Activated CD4-positive, alpha-beta T cell treated with anti-CD3 and anti-CD28 coated beads, Interleukin-2, amount 10 ng/mL, durations not matched to agents 24 days and 14 days (primary cell): ENCODE measurements at regions of chr14 and their contacts with region 1.

Region 1: DNA sequence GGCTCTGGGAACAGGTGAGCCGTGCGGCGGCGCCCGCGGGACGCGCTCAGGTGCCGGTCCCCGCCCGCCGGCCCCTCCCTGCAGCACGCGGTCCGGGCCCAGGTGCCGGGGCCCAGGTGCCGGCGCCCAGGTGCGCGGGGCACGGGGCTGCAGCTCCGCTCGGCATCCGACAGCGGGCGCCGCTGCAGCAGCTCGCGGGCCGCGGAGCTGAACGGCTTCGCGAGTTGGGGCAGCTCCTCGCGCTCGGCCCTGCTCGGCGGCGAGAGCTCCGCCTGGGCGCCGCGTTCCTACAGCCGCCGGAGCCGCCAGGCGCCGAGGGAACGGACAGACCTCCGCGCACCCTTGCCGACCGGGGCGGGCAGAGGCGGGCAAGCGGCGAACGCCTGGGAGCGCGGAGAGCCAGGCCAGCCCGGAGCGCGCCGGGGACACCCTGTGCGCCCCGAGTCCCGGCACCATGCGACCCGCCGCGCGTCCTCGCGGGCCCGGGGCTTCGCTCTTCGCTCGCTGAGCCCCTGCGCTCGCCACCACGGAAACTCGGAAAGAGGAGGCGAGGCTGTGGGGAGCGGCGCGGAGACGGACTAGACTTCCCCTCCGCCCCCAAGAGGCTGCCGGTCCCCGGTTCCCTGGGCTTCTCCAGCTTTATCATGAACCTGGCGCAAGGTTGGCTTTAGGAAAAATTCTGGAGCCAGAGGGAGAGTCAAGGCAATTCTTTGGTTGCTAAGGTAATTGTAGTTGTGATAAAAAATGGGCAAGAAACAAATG is at the start of gene RGS6:
- DNase-seq: peak; percentile 76
- H3K4me3 Mint-ChIP-seq: peak within 1 kb of the TSS; percentile 75
- H3K27ac Mint-ChIP-seq: peak within 1 kb of the TSS; percentile 82
- H3K4me1 Mint-ChIP-seq: peaks cover 13% of the 10 kb centered on the region
- H3K27me3 Mint-ChIP-seq: peaks cover 61% of the 10 kb centered on the region
- total RNA-seq, gene RGS6: 2.5 TPM in 2 replicates

Region 2: DNA sequence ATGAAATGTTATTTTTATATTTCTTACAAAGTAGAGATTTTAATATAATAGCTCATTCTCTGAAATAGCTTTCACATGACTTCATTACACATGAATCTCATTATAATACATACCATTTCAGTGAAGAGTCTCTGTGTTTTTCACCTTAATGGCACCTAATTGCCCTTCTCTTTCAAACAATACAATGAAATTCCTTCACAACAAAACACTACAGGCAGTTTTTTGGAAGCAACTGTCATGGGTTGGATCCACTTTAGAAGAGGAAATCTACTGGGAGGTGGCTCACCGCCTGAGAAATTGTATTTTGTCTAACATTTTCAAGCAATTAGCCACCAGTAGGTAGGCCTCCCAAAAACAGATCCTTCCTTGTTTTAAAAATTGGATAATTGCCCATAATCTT is 40.4 kb before region 1 on chr14:
- intact Hi-C with region 1: no loop called
- DNase-seq: no peak
- H3K4me3 Mint-ChIP-seq: no peak overlapping the region
- H3K27ac Mint-ChIP-seq: no peak overlapping the region
- H3K4me1 Mint-ChIP-seq: no peaks in the 10 kb centered on the region
- H3K27me3 Mint-ChIP-seq: no peaks in the 10 kb centered on the region

Region 3: GRCh38 chr14:71967704-71968103 is 35.3 kb after region 1 on chr14:
- intact Hi-C with region 1: loop called (anchors 1 kb)
- DNase-seq: no peak
- H3K4me3 Mint-ChIP-seq: peak overlapping the region; percentile 63
- H3K27ac Mint-ChIP-seq: peak overlapping the region; percentile 90
- H3K4me1 Mint-ChIP-seq: peaks cover 11% of the 10 kb centered on the region
- H3K27me3 Mint-ChIP-seq: peaks cover 8% of the 10 kb centered on the region

Region 4: DNA sequence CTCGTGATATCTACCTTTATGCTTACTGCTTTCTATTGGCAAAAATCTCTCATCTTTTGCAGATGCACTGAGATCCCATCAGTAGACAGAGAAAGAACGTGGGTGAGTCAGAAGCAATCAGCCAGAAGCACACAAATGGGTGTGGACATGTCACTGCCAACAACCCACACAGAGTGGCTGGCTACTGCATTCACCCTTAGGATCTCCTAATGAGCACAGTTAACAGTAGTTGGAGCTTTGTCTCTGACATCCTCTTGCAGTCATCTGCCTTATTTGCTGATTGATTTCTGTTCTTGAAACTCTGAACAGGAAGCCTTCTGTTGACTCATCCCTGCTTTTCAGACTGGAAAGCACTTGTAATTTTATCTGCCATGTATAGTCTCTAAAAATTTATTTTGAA is 117.1 kb after region 1 on chr14:
- intact Hi-C with region 1: loop called (anchors 2 kb)
- DNase-seq: peak; percentile 75
- H3K4me3 Mint-ChIP-seq: peak overlapping the region; percentile 40
- H3K27ac Mint-ChIP-seq: peak overlapping the region; percentile 79
- H3K4me1 Mint-ChIP-seq: peaks cover 17% of the 10 kb centered on the region
- H3K27me3 Mint-ChIP-seq: peaks cover 7% of the 10 kb centered on the region

Region 5: DNA sequence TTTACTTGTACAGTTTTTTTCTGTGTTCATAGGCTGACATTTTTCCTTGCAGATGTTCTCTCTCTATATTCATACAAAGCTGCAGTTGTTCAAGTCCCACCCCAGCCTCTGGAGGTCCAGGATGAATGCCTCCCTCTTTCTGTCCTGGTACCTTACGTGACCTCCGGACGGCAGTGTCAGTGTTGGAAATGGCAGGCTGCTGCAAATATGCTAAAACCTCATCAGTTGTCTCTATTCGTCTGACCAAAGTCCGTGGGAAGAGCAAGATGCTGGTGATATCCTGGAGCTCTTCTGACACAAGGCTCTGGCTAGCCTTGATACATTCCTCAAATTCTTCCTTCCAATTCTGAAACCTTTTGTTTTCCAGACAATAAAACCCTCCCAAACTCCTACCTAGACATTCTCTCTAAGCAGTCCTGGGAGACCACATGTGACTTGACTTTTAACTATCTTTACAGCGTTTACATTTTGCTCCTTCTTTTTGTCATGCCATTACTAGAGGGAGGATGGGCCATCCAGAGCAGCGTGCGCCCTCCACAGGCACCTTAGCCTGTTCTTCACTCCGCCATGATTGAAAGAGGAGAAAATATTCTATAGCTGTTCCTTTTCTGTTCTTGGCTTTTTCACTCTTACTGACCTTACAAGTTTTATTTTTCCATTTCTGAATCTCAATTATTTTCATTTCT is 143.4 kb after region 1 on chr14:
- intact Hi-C with region 1: no loop called
- DNase-seq: no peak
- H3K4me3 Mint-ChIP-seq: no peak overlapping the region
- H3K27ac Mint-ChIP-seq: no peak overlapping the region
- H3K4me1 Mint-ChIP-seq: no peaks in the 10 kb centered on the region
- H3K27me3 Mint-ChIP-seq: peaks cover 25% of the 10 kb centered on the region

Region 6: GRCh38 chr14:72291908-72292688 is 359.7 kb after region 1 on chr14:
- intact Hi-C with region 1: loop called (anchors 2 kb)
- DNase-seq: peak; percentile 79
- H3K4me3 Mint-ChIP-seq: no peak overlapping the region
- H3K27ac Mint-ChIP-seq: no peak overlapping the region
- H3K4me1 Mint-ChIP-seq: no peaks in the 10 kb centered on the region
- H3K27me3 Mint-ChIP-seq: peaks cover 16% of the 10 kb centered on the region